ENCODE measurements at regions of chr5 and their contacts with region 1.

Region 1: GRCh38 chr5:61162010-61162831 is at the start of gene SMIM15:
- DNase-seq: peak; percentile 93
- H3K4me3 ChIP-seq: peak within 1 kb of the TSS; percentile 70 to 87 (median 84)
- H3K27ac ChIP-seq: peak within 1 kb of the TSS; percentile 92 to 96 (median 94)
- H3K4me1 ChIP-seq: peaks cover 6 to 34% (median 24%) of the 10 kb centered on the region in 4 donors
- H3K27me3 ChIP-seq: no peaks in the 10 kb centered on the region
- CTCF ChIP-seq: peak in 2 of 5 experiments; percentile 33 to 55
- EP300 ChIP-seq: no peak
- POLR2A ChIP-seq: peak; percentile 85
- total RNA-seq, gene SMIM15: 6.6 to 56.9 (median 30.9) TPM

Region 2: DNA sequence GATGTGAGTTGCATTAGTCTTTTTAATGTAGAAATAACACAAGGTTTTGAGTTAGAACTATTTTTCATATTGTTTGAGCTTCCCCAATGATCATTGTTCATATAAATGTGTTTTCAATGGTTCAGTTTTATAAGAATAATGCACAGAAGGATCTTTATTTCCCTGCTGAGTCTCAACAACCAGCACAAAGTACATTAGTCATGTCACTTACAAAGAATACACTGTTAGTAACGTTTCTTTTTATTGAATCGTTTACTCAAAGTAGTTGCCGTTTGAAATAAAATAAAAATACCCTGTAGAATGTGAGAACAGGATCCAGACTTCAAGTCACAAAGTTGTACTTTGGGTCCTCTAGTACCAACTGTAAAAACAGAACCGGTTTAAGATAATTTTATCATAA is 258.9 kb before region 1 on chr5:
- in situ Hi-C with region 1: no loop called
- intact Hi-C with region 1: no loop called
- DNase-seq: no peak
- H3K4me3 ChIP-seq: no peak overlapping the region
- H3K27ac ChIP-seq: no peak overlapping the region
- H3K4me1 ChIP-seq: no peaks in the 10 kb centered on the region
- H3K27me3 ChIP-seq: no peaks in the 10 kb centered on the region
- CTCF ChIP-seq: no peak
- EP300 ChIP-seq: no peak
- POLR2A ChIP-seq: no peak

Region 3: GRCh38 chr5:61319388-61320146 is 157.3 kb after region 1 on chr5:
- in situ Hi-C with region 1: loop called in 2 of 4 experiments (anchors 10 kb)
- intact Hi-C with region 1: no loop called
- DNase-seq: peak; percentile 36
- H3K4me3 ChIP-seq: peak overlapping the region in 1 of 4 donors; percentile 18
- H3K27ac ChIP-seq: peak overlapping the region; percentile 72 to 82 (median 77)
- H3K4me1 ChIP-seq: peaks cover 20 to 58% (median 44%) of the 10 kb centered on the region in 4 donors
- H3K27me3 ChIP-seq: no peaks in the 10 kb centered on the region
- CTCF ChIP-seq: no peak
- EP300 ChIP-seq: no peak
- POLR2A ChIP-seq: no peak

Region 4: DNA sequence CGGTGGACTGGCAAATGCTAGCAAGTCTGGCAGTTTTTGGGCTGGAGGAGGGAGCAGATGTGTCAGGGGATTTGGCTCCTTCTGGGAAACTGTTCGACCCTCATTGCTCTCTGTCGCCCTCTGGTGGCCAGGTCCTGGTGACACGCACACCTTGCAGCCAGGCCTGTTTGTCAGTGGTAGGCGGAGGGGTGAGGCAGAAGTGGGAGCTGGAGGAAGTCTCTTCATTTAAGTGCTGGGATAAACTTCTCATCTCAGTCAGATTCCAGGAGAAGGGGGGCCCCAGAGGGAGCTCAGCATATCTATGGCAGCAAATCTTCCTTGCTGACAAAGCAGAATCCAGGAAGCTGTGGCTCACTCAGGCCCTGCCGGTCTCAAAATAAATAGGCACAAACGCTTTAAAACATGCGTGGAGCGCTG is 496.4 kb after region 1 on chr5:
- in situ Hi-C with region 1: loop called in 1 of 4 experiments (anchors 25 kb)
- intact Hi-C with region 1: loop called (anchors 10 kb)
- DNase-seq: peak; percentile 88
- H3K4me3 ChIP-seq: no peak overlapping the region
- H3K27ac ChIP-seq: no peak overlapping the region
- H3K4me1 ChIP-seq: no peaks in the 10 kb centered on the region
- H3K27me3 ChIP-seq: no peaks in the 10 kb centered on the region
- CTCF ChIP-seq: peak; percentile 90 to 94 (median 91)
- EP300 ChIP-seq: no peak
- POLR2A ChIP-seq: no peak

Measured in transverse colon (tissue), 4 donors.